ENCODE measurements at regions of chr1 and their contacts with region 1.

Region 1: GRCh38 chr1:152034646-152035405 is 2.0 kb downstream of the S100A11 start:
- DNase-seq: peak; percentile 78 to 82
- H3K4me3 ChIP-seq: peak overlapping the region; percentile 85
- H3K4me3 Mint-ChIP-seq: peak overlapping the region; percentile 97
- H3K27ac Mint-ChIP-seq: peak overlapping the region; percentile 94
- H3K4me1 ChIP-seq: peaks cover 18% of the 10 kb centered on the region
- H3K4me1 Mint-ChIP-seq: peaks cover 7% of the 10 kb centered on the region
- H3K27me3 ChIP-seq: no peaks in the 10 kb centered on the region
- H3K27me3 Mint-ChIP-seq: no peaks in the 10 kb centered on the region
- CTCF ChIP-seq: peak; percentile 80 to 88

Region 2: DNA sequence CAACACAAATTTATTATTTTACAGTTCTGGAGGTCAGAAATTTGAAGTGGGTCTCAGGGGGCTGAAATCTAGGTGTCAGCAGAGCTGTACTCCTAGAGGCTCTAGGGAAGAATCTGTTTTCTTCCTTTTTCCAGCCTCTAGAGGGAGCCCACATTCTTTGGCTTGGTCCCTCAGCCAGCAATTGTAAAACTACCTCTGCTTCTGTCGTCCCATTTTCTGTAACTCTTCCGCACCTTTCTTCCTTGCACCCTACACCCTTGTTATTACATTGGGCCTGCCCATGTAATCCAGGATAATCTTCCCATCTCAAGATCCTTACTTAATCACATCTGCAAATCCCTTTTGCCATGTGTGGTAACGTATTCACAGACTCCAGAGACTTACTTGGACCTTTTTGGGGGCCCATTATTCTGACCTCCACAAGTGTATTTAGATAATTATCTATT is 100.8 kb before region 1 on chr1:
- CTCF ChIA-PET with region 1: interaction called, 13 read pairs
- POLR2A ChIA-PET with region 1: interaction called, 5 read pairs
- intact Hi-C with region 1: loop called (anchors 1 kb)
- DNase-seq: peak; percentile 48 to 78
- H3K4me3 ChIP-seq: no peak overlapping the region
- H3K4me3 Mint-ChIP-seq: no peak overlapping the region
- H3K27ac Mint-ChIP-seq: peak overlapping the region; percentile 63
- H3K4me1 ChIP-seq: peaks cover 32% of the 10 kb centered on the region
- H3K4me1 Mint-ChIP-seq: peaks cover 34% of the 10 kb centered on the region
- H3K27me3 ChIP-seq: no peaks in the 10 kb centered on the region
- H3K27me3 Mint-ChIP-seq: no peaks in the 10 kb centered on the region
- CTCF ChIP-seq: peak; percentile 85 to 87

Region 3: GRCh38 chr1:151976858-151977257 is 58.0 kb before region 1 on chr1:
- CTCF ChIA-PET with region 1: no interaction called
- POLR2A ChIA-PET with region 1: interaction called, 5 read pairs
- intact Hi-C with region 1: loop called (anchors 2 kb)
- DNase-seq: no peak
- H3K4me3 ChIP-seq: no peak overlapping the region
- H3K4me3 Mint-ChIP-seq: peak overlapping the region; percentile 56
- H3K27ac Mint-ChIP-seq: peak overlapping the region; percentile 85
- H3K4me1 ChIP-seq: peaks cover 94% of the 10 kb centered on the region
- H3K4me1 Mint-ChIP-seq: peaks cover 71% of the 10 kb centered on the region
- H3K27me3 ChIP-seq: no peaks in the 10 kb centered on the region
- H3K27me3 Mint-ChIP-seq: no peaks in the 10 kb centered on the region
- CTCF ChIP-seq: no peak

Region 4: GRCh38 chr1:152013664-152014237 is 21.1 kb before region 1 on chr1:
- CTCF ChIA-PET with region 1: interaction called, 16 read pairs
- POLR2A ChIA-PET with region 1: no interaction called
- intact Hi-C with region 1: loop called (anchors 1 kb)
- DNase-seq: peak; percentile 68 to 69
- H3K4me3 ChIP-seq: no peak overlapping the region
- H3K4me3 Mint-ChIP-seq: no peak overlapping the region
- H3K27ac Mint-ChIP-seq: no peak overlapping the region
- H3K4me1 ChIP-seq: 0 out of 2 replicates have a peak, but pooled peaks cover 3% of the 10 kb centered on the region
- H3K4me1 Mint-ChIP-seq: peaks cover 7% of the 10 kb centered on the region
- H3K27me3 ChIP-seq: no peaks in the 10 kb centered on the region
- H3K27me3 Mint-ChIP-seq: no peaks in the 10 kb centered on the region
- CTCF ChIP-seq: peak; percentile 76 to 86

Region 5: DNA sequence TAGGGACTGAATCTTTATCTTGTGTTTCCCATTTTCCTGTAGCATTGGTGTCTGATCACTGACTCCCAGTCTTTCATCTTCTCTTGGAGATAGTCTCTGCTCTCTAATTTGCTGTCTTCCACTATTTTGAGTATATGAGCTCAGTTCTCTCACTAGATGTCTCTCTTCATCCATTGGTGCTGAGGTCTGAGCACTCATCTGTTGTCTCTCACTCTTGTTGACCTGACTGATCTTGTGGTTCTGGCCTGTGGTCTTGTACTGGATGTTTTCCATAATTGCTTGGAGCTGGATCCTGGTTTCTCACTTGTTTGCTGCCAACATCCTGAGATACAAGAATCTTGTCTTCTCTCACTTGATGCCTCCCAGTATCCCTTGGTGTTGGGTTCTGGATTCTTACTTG is 27.1 kb after region 1 on chr1:
- CTCF ChIA-PET with region 1: interaction called, 10 read pairs
- POLR2A ChIA-PET with region 1: no interaction called
- intact Hi-C with region 1: no loop called
- DNase-seq: no peak
- H3K4me3 ChIP-seq: no peak overlapping the region
- H3K4me3 Mint-ChIP-seq: no peak overlapping the region
- H3K27ac Mint-ChIP-seq: no peak overlapping the region
- H3K4me1 ChIP-seq: no peaks in the 10 kb centered on the region
- H3K4me1 Mint-ChIP-seq: no peaks in the 10 kb centered on the region
- H3K27me3 ChIP-seq: peaks cover under 1% of the 10 kb centered on the region; the same call in 1 of the 2 replicates
- H3K27me3 Mint-ChIP-seq: peaks cover 16% of the 10 kb centered on the region
- CTCF ChIP-seq: no peak

Region 6: DNA sequence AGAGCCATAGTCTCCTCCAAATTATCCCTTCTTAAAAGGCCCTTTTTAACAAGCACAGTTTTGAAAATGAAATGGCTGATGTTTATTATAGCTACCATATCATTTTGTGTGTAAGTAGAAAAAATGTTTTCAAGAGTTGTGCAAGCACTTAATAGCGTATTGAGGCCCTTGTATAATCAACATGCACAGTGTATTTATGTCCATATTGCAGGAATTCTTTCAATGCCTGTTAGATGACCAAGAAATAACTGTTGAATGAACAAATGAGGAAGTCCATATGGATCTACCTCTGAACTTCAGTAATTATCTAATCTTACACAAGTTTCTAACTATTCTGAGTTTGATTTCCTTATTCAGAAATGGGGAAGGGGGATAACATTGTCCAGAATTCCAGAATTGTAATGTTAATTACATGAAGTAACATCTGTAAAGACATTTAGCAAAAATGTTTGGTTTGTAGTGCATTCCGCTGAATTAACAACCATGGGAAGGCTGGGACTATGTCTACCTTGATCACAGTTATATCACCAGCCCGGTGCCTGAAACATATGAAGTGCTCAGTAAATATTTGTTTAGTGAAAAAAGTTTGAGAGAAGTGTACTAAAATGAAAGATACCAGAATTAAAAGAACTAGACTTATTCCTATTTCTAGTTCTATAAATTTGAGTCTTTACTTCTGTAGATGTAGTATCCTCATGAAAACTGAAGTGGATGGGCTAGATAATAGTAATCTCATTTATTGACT is 61.5 kb after region 1 on chr1:
- CTCF ChIA-PET with region 1: no interaction called
- POLR2A ChIA-PET with region 1: no interaction called
- intact Hi-C with region 1: no loop called
- DNase-seq: no peak
- H3K4me3 ChIP-seq: no peak overlapping the region
- H3K4me3 Mint-ChIP-seq: no peak overlapping the region
- H3K27ac Mint-ChIP-seq: no peak overlapping the region
- H3K4me1 ChIP-seq: no peaks in the 10 kb centered on the region
- H3K4me1 Mint-ChIP-seq: no peaks in the 10 kb centered on the region
- H3K27me3 ChIP-seq: no peaks in the 10 kb centered on the region
- H3K27me3 Mint-ChIP-seq: peaks cover 25% of the 10 kb centered on the region
- CTCF ChIP-seq: no peak

Region 7: DNA sequence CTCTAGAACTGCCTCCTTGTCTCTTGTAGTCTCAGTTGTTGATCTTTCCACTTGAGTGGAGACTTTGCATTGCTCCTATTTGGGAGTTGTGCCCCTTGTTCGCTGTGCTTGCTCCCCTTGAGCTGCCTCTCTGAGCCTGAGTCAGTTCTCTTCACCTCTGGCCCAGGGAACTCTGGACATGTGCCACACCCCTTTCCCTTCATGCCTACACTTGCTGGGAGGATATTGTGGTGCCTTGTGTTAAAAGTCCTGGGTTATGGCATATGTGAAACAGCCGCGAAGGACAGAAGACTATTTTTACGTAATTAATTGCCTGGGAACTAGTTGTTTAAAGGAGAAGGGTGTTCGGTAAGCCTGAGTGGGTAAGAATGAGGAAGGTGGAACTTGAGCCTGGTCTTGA is 156.4 kb after region 1 on chr1:
- CTCF ChIA-PET with region 1: no interaction called
- POLR2A ChIA-PET with region 1: no interaction called
- intact Hi-C with region 1: no loop called
- DNase-seq: no peak
- H3K4me3 ChIP-seq: no peak overlapping the region
- H3K4me3 Mint-ChIP-seq: no peak overlapping the region
- H3K27ac Mint-ChIP-seq: no peak overlapping the region
- H3K4me1 ChIP-seq: no peaks in the 10 kb centered on the region
- H3K4me1 Mint-ChIP-seq: no peaks in the 10 kb centered on the region
- H3K27me3 ChIP-seq: peaks cover 1% of the 10 kb centered on the region; the same call in 1 of the 2 replicates
- H3K27me3 Mint-ChIP-seq: peaks cover 7% of the 10 kb centered on the region
- CTCF ChIP-seq: no peak